ENCODE measurements at regions of chr18 and their contacts with region 1.

Region 1: DNA sequence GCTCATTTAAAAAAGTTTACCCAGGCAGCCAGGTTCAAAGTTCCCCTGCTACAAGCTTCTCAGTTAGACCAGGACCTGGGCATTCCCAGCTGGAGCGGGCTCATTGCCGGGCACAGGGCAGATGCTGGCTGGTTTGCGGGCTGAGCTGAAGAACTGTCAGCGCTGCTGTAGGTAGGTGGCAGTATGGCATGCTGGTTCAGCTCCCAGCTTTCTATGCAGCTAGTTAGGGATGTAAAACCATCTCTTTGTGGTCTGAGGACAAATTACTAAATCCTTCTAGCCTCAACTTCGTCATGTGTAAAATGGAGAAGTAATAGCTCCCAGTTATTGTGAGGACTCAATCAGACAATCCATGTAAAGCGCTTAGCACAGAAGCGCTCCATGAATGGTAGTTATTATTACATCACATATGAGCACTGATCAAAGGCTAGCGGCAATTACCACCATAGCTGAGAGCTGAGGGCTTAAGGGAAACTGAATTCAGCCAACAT is 2.4 kb upstream of the LDLRAD4 start:
- DNase-seq: peak; percentile 78
- H3K4me3 Mint-ChIP-seq: peak overlapping the region; percentile 68
- H3K27ac Mint-ChIP-seq: no peak overlapping the region
- H3K4me1 Mint-ChIP-seq: peaks cover 29% of the 10 kb centered on the region
- H3K27me3 Mint-ChIP-seq: peaks cover 22% of the 10 kb centered on the region

Region 2: GRCh38 chr18:12516049-12516630 is 700.0 kb before region 1 on chr18:
- CTCF ChIA-PET with region 1: no interaction called
- intact Hi-C with region 1: no loop called
- DNase-seq: no peak
- H3K4me3 Mint-ChIP-seq: no peak overlapping the region
- H3K27ac Mint-ChIP-seq: no peak overlapping the region
- H3K4me1 Mint-ChIP-seq: no peaks in the 10 kb centered on the region
- H3K27me3 Mint-ChIP-seq: no peaks in the 10 kb centered on the region

Region 3: DNA sequence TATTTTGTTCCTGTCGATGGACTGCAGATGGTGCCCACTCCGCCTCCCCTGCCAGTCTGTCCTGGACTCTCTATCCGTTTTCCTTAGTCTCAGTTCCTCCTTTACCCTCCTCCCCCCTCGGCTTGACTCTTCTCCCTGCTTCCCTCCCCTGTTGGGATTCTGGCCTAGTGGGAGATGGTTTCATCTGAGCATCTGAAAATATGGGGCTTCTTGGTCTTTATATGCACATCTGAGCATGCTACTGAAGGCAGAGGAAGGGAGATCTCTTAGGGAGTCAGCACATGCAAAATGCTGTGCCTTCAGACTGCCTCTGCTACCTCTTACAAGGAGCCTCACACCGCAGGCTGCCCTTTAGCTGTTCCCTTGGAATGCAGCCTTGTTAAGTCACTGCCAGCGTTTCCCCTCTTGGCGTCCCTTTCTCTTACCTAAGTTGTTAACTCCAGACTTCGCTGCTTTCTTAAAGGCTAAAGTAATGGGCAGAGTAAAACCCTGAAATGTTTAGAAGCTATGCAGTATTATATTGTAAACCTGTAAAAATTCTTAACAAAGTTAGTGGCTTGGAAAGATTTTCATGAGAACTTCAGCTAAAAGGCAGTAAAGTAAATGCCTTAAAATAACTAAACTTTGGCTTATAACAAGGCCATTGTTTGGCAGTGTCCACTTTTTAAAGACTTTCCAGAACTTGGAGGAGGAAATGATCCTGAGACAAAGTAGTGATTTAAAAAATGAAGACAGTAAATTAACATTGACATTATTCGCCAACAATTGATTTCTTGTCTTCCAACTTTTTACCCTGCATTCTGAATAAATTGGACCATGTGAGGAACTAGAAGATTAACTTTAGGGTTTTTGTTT is 52.2 kb after region 1 on chr18:
- CTCF ChIA-PET with region 1: interaction called, 15 read pairs
- intact Hi-C with region 1: loop called (anchors 1 kb)
- DNase-seq: no peak
- H3K4me3 Mint-ChIP-seq: no peak overlapping the region
- H3K27ac Mint-ChIP-seq: no peak overlapping the region
- H3K4me1 Mint-ChIP-seq: peaks cover 71% of the 10 kb centered on the region
- H3K27me3 Mint-ChIP-seq: no peaks in the 10 kb centered on the region

Region 4: DNA sequence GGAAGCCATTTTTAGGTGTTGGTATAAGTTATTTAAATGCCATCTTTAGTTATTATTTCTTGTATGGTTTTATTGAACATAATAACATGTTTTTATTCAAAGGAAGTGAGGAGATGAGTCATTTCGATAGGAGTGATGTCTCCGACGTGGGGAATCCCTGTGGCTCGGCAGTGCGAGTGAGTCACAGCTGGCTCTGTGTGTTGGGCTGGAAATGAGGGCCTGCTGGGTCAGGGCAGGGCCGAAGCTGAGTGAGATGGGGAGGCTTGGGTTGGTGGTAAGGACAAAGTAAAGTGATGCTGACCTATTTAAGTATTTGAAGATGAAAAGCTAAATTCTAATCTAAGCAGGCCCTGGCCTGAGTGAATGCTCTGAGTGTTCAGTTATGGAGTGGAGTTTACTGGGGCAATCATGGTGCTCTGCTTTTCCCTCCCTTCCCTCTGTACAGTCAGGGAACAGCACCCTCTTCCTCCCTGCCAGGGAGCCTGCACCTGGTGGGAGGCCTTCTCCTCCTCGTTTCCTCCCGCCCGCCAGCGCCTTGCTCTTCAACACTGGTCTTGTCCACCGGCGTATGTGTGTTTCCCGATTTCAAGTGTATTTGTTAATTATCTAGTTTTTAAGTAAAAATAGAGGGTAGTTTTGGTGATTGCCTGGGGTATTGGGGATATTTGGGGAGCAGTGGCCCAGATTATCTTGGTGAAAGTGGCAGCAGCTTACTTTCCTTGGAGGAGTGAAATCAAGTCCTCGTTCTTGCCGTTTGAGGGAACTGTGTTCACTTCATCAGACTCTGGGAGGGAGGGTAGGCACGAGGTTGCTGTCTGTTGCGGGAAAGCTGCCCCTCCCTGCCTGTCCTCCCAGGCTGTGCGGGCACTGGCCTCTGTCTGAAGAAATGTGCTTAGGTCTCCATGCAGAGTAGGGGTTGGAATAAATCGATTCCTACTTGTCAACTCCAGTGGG is 159.4 kb after region 1 on chr18:
- CTCF ChIA-PET with region 1: interaction called, 27 read pairs
- intact Hi-C with region 1: loop called (anchors 1 kb)
- DNase-seq: peak; percentile 93
- H3K4me3 Mint-ChIP-seq: peak overlapping the region; percentile 32
- H3K27ac Mint-ChIP-seq: peak overlapping the region; percentile 86
- H3K4me1 Mint-ChIP-seq: peaks cover 81% of the 10 kb centered on the region
- H3K27me3 Mint-ChIP-seq: no peaks in the 10 kb centered on the region

Region 5: DNA sequence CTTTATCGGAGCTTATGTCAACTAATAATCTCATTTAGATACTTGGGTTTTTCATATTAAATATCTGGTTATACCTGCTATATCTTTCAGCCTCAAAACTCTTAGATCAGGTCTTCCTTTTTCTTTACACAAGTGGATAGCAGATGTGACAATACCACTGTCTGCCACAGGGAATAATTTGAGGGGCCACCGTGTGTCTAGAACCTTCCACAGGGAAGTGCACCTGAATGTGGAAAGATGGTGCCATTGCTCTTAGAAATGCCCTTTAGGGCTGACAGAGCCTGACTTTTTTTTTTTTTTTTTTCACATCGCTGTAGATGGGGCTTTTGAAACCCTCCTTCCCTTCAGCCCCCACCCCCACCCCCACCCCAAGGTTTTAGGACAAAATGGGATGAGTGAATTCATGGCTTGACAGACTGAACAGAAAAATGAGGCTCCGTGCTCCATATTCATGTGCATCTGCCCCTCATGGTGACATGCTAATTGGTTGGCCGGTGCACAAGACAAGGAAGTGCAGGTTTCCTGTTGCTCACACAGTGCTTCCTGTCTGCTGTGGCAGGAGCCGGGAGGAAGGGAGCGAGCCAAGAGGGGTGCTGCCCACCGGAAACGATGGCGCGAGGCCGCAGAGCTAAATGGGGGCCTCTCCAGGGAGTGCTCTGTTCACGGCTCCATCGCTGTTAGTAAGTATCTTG is 248.4 kb after region 1 on chr18:
- CTCF ChIA-PET with region 1: interaction called, 8 read pairs
- intact Hi-C with region 1: loop called (anchors 1 kb)
- DNase-seq: peak; percentile 86
- H3K4me3 Mint-ChIP-seq: peak overlapping the region; percentile 82
- H3K27ac Mint-ChIP-seq: peak overlapping the region; percentile 95
- H3K4me1 Mint-ChIP-seq: peaks cover 56% of the 10 kb centered on the region
- H3K27me3 Mint-ChIP-seq: no peaks in the 10 kb centered on the region

Region 6: DNA sequence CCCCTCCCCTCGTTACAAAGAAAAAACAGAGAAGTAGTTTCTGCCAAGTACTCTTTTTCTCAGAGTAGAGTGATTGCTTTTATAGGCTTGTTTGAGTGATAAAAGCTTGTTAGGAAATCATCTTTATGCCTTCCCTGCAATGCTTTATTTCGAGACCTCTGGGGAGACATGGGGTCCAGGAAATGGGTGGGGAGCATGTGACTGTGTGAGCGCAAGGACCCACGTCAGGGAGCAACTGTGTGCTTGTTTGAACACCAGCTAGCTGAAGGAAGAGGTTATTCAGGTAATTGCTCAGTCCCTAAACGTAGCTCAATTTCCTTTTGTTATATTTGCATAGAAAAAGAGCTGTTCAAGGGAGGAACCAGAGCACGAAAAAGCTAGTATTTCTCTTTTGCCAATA is 322.9 kb after region 1 on chr18:
- CTCF ChIA-PET with region 1: interaction called, 5 read pairs
- intact Hi-C with region 1: loop called (anchors 2 kb)
- DNase-seq: peak; percentile 47
- H3K4me3 Mint-ChIP-seq: peak overlapping the region; percentile 17
- H3K27ac Mint-ChIP-seq: peak overlapping the region; percentile 43
- H3K4me1 Mint-ChIP-seq: peaks cover 48% of the 10 kb centered on the region
- H3K27me3 Mint-ChIP-seq: no peaks in the 10 kb centered on the region

Region 7: DNA sequence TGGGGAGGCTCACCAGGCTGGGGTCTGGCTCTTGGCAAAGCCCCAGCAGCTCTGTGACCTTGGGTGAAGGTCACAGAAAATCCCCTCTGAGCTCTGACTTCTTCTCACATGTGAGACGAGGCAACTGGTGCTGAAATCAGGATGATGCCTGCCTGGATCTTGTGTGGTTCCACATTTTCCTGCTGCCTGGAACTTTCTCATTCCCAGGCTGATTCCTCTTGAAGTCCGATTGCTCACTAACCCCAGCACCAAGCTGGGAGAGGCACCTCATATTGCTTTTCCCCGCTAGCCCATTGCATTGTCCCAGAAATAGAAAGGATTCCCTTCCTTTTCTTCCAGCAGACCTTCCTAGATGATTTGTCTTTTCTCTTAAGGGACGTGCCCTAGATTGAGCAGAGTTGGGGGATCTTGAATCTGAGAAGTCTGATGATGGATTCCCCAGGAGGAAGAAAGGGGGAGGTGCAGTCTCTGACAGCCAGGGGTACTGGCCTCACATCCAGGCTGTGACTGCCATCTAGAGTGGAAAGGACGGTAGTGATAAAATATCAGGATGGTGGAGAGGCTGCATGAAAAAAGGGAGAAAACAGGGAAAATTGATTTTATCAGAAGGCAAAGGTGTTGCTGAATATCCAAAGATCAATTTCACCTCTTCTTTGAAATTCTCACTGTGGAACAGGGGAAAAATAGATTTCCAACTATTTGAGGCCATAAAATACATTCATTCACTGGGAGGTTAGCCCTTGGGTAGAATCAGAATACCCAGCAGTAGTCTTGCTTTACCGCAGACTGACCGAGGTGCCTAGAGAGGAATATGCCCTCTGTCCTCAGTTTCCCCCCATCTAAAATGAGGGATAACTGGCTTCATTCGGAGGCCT is 413.9 kb after region 1 on chr18:
- CTCF ChIA-PET with region 1: interaction called, 6 read pairs
- intact Hi-C with region 1: loop called (anchors 1 kb)
- DNase-seq: peak; percentile 68
- H3K4me3 Mint-ChIP-seq: no peak overlapping the region
- H3K27ac Mint-ChIP-seq: no peak overlapping the region
- H3K4me1 Mint-ChIP-seq: no peaks in the 10 kb centered on the region
- H3K27me3 Mint-ChIP-seq: no peaks in the 10 kb centered on the region

Region 8: DNA sequence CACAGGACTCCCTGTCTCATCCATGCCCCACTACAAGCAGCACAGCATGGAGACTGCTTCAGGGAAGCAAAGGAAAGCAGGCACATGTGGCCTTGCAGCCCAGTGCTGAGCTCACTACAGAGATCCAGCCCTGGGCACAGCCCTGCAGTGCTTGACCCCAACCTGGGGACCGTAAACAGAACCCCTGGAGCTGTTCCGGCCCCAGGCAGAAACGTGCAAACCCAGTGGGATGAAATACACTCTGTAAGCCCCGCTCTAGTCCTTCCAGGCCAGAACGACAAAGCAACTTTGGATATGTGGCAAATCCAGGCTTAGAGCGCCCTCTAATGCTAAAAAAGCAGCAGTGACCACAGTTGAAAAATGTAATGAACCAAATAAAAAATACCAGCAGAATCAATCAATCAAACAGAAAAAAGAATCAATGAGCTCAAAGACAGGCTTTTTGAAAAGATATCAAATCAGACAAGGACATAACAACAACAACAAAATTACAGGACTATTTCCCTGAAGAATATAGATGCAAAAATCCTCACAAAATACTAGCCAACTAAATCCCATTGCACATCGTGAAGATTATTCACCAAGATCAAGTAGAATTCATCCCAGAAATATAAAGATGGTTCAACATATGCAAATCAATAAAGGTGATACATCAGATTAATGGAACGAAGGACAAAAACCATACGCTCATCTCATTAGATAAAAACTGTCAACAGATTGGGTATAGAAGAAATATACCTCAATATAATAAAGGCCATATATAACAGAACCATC is 870.5 kb after region 1 on chr18:
- CTCF ChIA-PET with region 1: interaction called, 3 read pairs
- intact Hi-C with region 1: loop called (anchors 1 kb)
- DNase-seq: peak; percentile 22
- H3K4me3 Mint-ChIP-seq: no peak overlapping the region
- H3K27ac Mint-ChIP-seq: no peak overlapping the region
- H3K4me1 Mint-ChIP-seq: no peaks in the 10 kb centered on the region
- H3K27me3 Mint-ChIP-seq: peaks cover 3% of the 10 kb centered on the region

Measured in activated naive CD4-positive, alpha-beta T cell treated with anti-CD3 and anti-CD28 coated beads for 36 hours (primary cell).